B cell (primary cell): ENCODE measurements at regions of chr3 and their contacts with region 1.

Region 1: DNA sequence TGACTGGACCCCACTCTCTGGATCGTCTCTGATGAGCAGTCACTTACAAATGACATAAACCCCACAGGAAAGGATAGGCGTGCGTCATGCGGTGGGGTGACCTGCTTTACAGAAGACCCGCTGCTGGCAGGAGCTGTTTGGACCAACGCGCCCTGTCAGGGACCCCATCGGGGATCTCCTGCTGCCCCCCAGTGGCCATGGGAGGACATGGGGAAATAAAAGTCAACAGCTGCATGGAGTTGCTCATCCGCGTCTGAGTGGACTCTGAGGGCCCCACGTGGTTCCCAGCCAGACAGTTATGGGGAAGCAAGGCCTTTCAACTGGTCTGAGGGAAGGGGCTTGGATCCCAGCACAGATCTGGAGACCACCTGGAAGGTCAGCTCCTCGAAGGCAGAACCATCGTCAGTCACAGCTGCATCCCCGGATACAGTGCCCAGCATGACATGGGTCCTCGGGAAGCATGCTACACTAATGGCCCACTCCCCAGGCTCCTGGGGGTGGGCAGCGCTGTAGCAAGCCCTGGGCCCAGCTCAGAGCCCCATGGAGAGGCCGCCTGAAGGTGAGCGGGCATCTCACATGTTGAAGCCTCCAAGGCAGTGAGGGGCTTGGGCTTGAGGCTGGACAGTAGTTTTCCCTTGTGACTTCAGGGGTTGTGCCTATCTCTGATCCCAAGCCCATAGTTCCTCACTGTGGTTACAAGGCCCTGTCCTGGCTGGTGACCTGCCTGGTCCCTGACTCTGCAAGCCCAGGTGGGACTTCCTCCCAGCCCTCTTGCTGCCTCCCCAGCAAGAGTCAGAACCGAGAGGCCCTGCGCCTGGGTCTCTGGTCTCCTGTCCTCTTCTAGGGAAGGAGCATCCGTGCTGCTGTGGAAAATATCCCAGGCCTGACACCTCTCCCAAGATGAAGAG is 32.3 kb downstream of the PTH1R start:
- DNase-seq: peak; percentile 83
- ATAC-seq: peak; percentile 93
- H3K4me3 ChIP-seq: no peak overlapping the region
- H3K4me3 Mint-ChIP-seq: no peak overlapping the region
- H3K27ac ChIP-seq: no peak overlapping the region
- H3K27ac Mint-ChIP-seq: no peak overlapping the region
- H3K4me1 ChIP-seq: peaks cover 9 to 12% of the 10 kb centered on the region in 2 donors
- H3K4me1 Mint-ChIP-seq: peaks cover 7% of the 10 kb centered on the region
- H3K27me3 ChIP-seq: peaks cover 0 to 2% (median 0%) of the 10 kb centered on the region in 4 experiments
- H3K27me3 Mint-ChIP-seq: no peaks in the 10 kb centered on the region
- CTCF ChIP-seq: peak; percentile 82

Region 2: DNA sequence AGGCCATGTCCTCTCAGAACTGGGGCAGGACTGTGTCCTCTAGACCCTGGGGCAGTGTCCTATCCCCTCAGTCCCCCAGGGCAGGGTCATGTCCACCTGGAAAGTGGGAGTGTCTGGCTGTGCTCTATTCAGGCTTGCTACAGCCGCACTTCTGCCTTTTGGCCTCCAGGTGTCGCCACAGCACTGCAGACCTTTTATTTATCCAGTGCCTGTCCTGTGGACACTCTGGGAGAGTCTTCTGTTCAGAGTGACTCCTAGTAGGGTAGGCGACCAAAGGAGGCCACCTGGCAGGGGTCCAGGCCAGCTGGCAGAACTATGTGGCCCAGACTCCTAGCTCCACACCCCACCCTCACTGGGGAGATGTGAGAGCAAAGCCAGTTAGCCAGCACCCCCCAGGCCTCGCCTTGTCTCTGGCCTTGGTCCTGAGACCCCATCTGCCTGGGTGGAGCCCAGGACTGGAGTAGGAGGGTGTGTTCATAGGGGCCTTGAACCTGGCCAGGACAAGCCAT is 204.7 kb before region 1 on chr3:
- CTCF ChIA-PET with region 1: interaction called, 16 read pairs
- POLR2A ChIA-PET with region 1: no interaction called
- intact Hi-C with region 1: loop called (anchors 1 kb)
- DNase-seq: peak; percentile 81
- ATAC-seq: peak; percentile 83
- H3K4me3 ChIP-seq: no peak overlapping the region
- H3K4me3 Mint-ChIP-seq: no peak overlapping the region
- H3K27ac ChIP-seq: no peak overlapping the region
- H3K27ac Mint-ChIP-seq: no peak overlapping the region
- H3K4me1 ChIP-seq: peaks cover 3 to 8% of the 10 kb centered on the region in 2 donors
- H3K4me1 Mint-ChIP-seq: peaks cover 4% of the 10 kb centered on the region
- H3K27me3 ChIP-seq: peaks cover 0 to 34% (median 12%) of the 10 kb centered on the region in 4 experiments
- H3K27me3 Mint-ChIP-seq: peaks cover 16% of the 10 kb centered on the region
- CTCF ChIP-seq: peak; percentile 97

Region 3: DNA sequence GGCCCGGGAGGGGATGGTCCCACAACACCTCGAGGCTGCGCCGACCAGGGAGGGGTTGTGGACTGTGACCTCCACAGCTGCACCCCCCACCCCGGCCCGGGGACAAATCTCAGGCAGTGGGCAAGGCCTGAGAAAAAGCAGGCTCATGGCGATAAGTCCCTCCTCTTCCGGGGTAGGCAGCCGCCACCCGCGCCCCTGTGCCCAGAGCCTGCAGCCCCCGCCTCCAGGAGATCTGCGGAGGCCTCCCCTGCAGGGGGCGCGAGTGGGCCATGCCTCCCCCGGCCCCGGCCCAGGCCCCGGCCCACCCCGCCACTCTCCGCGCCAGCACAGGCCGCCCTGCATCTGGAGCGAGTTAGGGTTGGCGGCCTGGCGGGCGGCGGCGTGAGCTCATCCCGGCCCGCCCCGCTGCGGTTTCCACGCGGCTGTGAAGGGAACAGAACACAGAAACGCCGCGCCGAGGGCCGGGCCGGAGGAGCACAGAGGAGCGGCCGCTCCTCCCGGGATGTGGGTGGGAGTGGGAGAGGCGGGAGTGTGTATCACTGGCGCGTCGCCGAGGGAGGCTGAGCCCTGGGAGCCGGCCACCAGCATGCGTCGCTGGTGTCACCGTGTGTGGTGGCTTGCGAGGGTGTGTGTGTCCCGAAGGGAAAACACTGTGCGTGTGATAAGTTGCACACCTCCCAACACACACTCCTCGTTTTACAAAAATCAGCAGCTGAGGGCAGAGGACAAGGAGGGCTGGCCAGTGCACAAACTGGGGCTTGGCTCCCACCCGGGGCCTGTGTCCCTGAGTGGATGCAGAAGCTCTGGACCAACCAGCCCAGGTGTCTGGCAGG is 63.8 kb before region 1 on chr3:
- CTCF ChIA-PET with region 1: no interaction called
- POLR2A ChIA-PET with region 1: no interaction called
- intact Hi-C with region 1: loop called (anchors 1 kb)
- DNase-seq: peak; percentile 86
- ATAC-seq: peak; percentile 97
- H3K4me3 ChIP-seq: peak overlapping the region; percentile 16 to 86 (median 69)
- H3K4me3 Mint-ChIP-seq: peak overlapping the region; percentile 82
- H3K27ac ChIP-seq: peak overlapping the region; percentile 45 to 71
- H3K27ac Mint-ChIP-seq: peak overlapping the region; percentile 75
- H3K4me1 ChIP-seq: peaks cover 12 to 17% of the 10 kb centered on the region in 2 donors
- H3K4me1 Mint-ChIP-seq: peaks cover 9% of the 10 kb centered on the region
- H3K27me3 ChIP-seq: no peaks in the 10 kb centered on the region
- H3K27me3 Mint-ChIP-seq: no peaks in the 10 kb centered on the region
- CTCF ChIP-seq: peak; percentile 76

Region 4: GRCh38 chr3:46866720-46867549 is 42.9 kb before region 1 on chr3:
- CTCF ChIA-PET with region 1: interaction called, 27 read pairs
- POLR2A ChIA-PET with region 1: no interaction called
- intact Hi-C with region 1: loop called (anchors 1 kb)
- DNase-seq: peak; percentile 81
- ATAC-seq: peak; percentile 64
- H3K4me3 ChIP-seq: no peak overlapping the region
- H3K4me3 Mint-ChIP-seq: no peak overlapping the region
- H3K27ac ChIP-seq: no peak overlapping the region
- H3K27ac Mint-ChIP-seq: no peak overlapping the region
- H3K4me1 ChIP-seq: no peaks in the 10 kb centered on the region
- H3K4me1 Mint-ChIP-seq: no peaks in the 10 kb centered on the region
- H3K27me3 ChIP-seq: peaks cover 0 to 13% (median 2%) of the 10 kb centered on the region in 4 experiments
- H3K27me3 Mint-ChIP-seq: peaks cover 24% of the 10 kb centered on the region
- CTCF ChIP-seq: peak; percentile 80

Region 5: GRCh38 chr3:46895204-46895660 is 14.6 kb before region 1 on chr3:
- CTCF ChIA-PET with region 1: interaction called, 17 read pairs
- POLR2A ChIA-PET with region 1: no interaction called
- intact Hi-C with region 1: no loop called
- DNase-seq: peak; percentile 82
- ATAC-seq: peak; percentile 78
- H3K4me3 ChIP-seq: no peak overlapping the region
- H3K4me3 Mint-ChIP-seq: peak overlapping the region; percentile 2
- H3K27ac ChIP-seq: no peak overlapping the region
- H3K27ac Mint-ChIP-seq: peak overlapping the region; percentile 4
- H3K4me1 ChIP-seq: peaks cover 23 to 26% of the 10 kb centered on the region in 2 donors
- H3K4me1 Mint-ChIP-seq: peaks cover 27% of the 10 kb centered on the region
- H3K27me3 ChIP-seq: peaks cover 0 to 62% (median 22%) of the 10 kb centered on the region in 4 experiments
- H3K27me3 Mint-ChIP-seq: peaks cover 53% of the 10 kb centered on the region
- CTCF ChIP-seq: peak; percentile 82

Region 6: DNA sequence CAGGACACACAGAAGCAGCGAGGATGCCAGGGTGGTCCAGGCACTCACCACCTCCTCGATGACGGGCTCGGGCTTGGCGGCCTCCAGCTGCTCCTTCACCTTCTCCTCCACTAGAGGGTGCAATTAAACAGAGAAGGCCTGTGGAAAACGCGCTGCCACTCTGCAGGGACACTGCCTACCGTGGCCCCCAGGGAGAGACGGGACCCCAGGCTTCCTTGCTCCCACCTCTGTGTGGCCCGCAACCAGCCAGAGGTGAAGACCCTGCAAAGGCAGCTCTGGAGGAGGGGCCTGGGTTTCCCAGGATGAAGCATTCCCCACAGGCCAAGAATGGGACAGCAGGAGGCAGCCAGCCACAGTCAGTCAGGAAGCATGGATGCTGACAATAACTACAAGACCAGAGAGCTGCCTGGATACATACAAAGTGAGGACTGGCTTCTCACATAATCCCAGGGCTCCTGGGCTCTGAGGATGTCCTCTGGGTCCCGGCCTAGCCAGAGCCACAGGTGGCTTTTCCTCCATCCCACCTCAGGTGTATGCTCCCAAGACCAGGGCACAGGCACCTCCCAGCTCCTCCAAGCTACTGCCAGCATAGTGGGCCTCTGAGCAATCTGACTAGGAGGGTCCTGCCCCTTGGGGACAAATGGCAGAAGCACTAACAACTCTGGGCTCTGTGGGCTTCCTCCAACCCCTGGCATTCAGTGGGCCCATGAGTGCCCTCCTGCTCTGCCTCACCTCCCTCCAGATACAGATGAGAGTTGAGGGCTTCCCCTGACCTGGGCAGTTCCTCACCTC is 14.0 kb after region 1 on chr3:
- CTCF ChIA-PET with region 1: interaction called, 14 read pairs
- POLR2A ChIA-PET with region 1: interaction called, 5 read pairs
- intact Hi-C with region 1: loop called (anchors 2 kb)
- DNase-seq: peak; percentile 66
- ATAC-seq: no peak
- H3K4me3 ChIP-seq: no peak overlapping the region
- H3K4me3 Mint-ChIP-seq: peak overlapping the region; percentile 21
- H3K27ac ChIP-seq: peak overlapping the region; percentile 85 to 92
- H3K27ac Mint-ChIP-seq: peak overlapping the region; percentile 83
- H3K4me1 ChIP-seq: peaks cover 57 to 59% of the 10 kb centered on the region in 2 donors
- H3K4me1 Mint-ChIP-seq: peaks cover 60% of the 10 kb centered on the region
- H3K27me3 ChIP-seq: no peaks in the 10 kb centered on the region
- H3K27me3 Mint-ChIP-seq: no peaks in the 10 kb centered on the region
- CTCF ChIP-seq: peak; percentile 70

Region 7: DNA sequence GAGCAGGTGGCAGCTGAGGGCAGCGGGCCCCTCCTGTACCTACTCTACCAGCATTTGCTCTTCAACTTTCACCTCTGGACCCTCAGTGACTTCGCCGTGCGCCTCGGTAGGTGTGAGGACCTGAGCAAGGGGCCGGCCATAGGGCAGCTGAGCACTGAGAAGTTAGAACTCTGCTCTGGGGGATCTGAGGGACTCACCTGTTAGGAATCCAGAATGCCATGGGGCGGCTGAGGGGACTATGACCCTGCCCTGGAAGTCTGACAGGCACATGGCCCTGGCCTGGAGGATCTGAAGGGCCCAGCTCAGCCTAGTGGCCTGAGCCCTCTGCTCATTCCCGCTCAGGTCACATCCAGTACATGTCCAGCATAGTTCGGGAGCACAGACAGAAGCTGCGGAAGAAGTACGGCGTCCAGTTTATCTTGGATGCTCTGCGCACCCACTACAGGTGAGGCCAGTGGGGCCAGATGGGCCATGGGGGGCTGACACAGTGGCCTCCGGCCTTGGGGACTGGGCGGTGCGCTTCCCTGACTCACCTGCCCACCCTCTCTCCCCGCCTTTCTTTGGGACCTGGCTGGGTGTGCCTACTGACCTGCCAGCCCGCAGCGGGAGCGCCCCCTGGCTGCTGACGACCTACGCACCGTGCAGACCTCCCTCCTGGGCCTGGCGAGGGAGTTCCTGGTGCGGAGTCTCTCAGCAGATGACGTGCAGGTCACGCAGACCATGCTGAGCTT is 88.5 kb after region 1 on chr3:
- CTCF ChIA-PET with region 1: interaction called, 16 read pairs
- POLR2A ChIA-PET with region 1: no interaction called
- intact Hi-C with region 1: no loop called
- DNase-seq: peak; percentile 79
- ATAC-seq: peak; percentile 88
- H3K4me3 ChIP-seq: no peak overlapping the region
- H3K4me3 Mint-ChIP-seq: no peak overlapping the region
- H3K27ac ChIP-seq: no peak overlapping the region
- H3K27ac Mint-ChIP-seq: no peak overlapping the region
- H3K4me1 ChIP-seq: peaks cover 3 to 16% of the 10 kb centered on the region in 2 donors
- H3K4me1 Mint-ChIP-seq: peaks cover 10% of the 10 kb centered on the region
- H3K27me3 ChIP-seq: no peaks in the 10 kb centered on the region
- H3K27me3 Mint-ChIP-seq: no peaks in the 10 kb centered on the region
- CTCF ChIP-seq: peak; percentile 84